Gastrocnemius medialis (tissue), 4 donors: ENCODE measurements at regions of chr4 and their contacts with region 1.

Region 1: DNA sequence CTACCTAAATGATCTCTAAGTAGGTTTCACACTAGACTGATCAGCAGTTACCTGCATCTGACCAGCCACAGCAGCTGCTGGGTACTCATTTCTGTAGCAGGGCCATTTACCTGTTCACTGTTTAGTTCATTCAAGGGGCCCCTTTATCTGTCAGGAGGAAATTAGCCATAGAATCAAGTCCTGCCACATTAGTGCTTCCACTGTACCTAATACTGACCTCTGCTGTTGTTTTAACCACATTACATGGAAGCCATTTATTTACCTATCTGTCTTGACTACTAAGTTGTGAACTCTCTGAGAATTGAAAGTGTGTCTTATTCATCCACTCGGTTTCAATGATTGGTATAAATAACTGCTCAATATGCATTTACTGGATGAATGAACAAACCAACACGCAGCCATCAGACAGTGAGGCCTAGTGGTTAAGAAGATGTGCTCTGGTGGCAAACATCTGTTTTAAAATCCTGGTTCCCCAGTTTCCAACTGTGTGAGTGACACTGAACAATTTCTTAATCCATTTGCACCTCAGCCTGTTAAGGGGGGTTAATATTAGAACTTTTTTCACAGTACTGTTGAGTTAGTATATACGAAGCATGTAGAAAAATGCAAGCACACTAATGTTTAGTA is 30.0 kb upstream of the ANXA5 start:
- DNase-seq: no peak
- ATAC-seq: peak in 1 of 2 donors; percentile 36
- H3K4me3 ChIP-seq: no peak overlapping the region
- H3K27ac ChIP-seq: no peak overlapping the region
- H3K4me1 ChIP-seq: no peaks in the 10 kb centered on the region
- H3K27me3 ChIP-seq: no peaks in the 10 kb centered on the region
- CTCF ChIP-seq: peak; percentile 24 to 63 (median 57)
- POLR2A ChIP-seq: no peak

Region 2: GRCh38 chr4:121192480-121192879 is 534.3 kb before region 1 on chr4:
- in situ Hi-C with region 1: loop called in 1 of 4 experiments (anchors 25 kb)
- intact Hi-C with region 1: loop called (anchors 5 kb)
- DNase-seq: no peak
- ATAC-seq: no peak
- H3K4me3 ChIP-seq: peak overlapping the region in 1 of 4 donors; percentile 28
- H3K27ac ChIP-seq: no peak overlapping the region
- H3K4me1 ChIP-seq: no peaks in the 10 kb centered on the region
- H3K27me3 ChIP-seq: no peaks in the 10 kb centered on the region
- CTCF ChIP-seq: peak in 4 of 5 experiments; percentile 30 to 61 (median 44)
- POLR2A ChIP-seq: no peak

Region 3: DNA sequence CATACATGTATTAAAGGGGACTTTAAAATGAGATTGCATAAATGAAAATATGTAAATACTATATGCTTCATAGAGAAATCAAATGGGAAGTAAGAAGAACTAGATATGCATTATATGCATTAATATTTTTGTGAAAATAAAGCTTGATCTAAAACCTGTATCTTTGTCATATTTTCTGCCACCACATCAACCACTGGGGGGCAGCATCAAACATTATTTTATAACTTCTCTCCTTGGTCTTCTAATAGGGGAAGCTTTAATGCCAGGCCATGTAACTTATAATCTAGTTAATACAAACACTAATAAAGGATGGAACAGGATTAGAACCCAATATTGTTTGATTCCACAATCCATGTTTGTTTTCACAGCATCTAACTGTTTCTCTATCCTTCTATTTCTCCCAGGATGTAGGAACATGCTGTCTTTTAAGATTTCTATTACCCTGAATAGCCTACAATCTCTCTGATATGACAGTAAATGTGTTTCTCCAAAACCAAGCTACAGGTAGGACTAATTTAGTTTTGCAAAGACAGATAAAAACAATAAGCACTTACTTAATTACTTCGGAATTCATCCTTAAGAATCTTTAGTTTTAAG is 355.9 kb before region 1 on chr4:
- in situ Hi-C with region 1: loop called in 3 of 4 experiments (anchors 25 kb)
- intact Hi-C with region 1: loop called (anchors 10 kb)
- DNase-seq: no peak
- ATAC-seq: no peak
- H3K4me3 ChIP-seq: no peak overlapping the region
- H3K27ac ChIP-seq: no peak overlapping the region
- H3K4me1 ChIP-seq: no peaks in the 10 kb centered on the region
- H3K27me3 ChIP-seq: no peaks in the 10 kb centered on the region
- CTCF ChIP-seq: peak in 3 of 5 experiments; percentile 15 to 56 (median 40)
- POLR2A ChIP-seq: no peak

Region 4: GRCh38 chr4:121484633-121485032 is 242.1 kb before region 1 on chr4:
- in situ Hi-C with region 1: loop called in 2 of 4 experiments (anchors 10 to 25 kb)
- intact Hi-C with region 1: loop called (anchors 10 kb)
- DNase-seq: no peak
- ATAC-seq: peak in 1 of 2 donors; percentile 36
- H3K4me3 ChIP-seq: no peak overlapping the region
- H3K27ac ChIP-seq: no peak overlapping the region
- H3K4me1 ChIP-seq: no peaks in the 10 kb centered on the region
- H3K27me3 ChIP-seq: no peaks in the 10 kb centered on the region
- CTCF ChIP-seq: peak in 3 of 5 experiments; percentile 34 to 47 (median 36)
- POLR2A ChIP-seq: no peak

Region 5: GRCh38 chr4:121696581-121697461 is 29.9 kb before region 1 on chr4 and contains the start of gene ANXA5:
- in situ Hi-C with region 1: no loop called
- intact Hi-C with region 1: loop called (anchors 1 kb)
- DNase-seq: peak; percentile 70 to 84
- ATAC-seq: peak; percentile 88 to 90
- H3K4me3 ChIP-seq: peak within 1 kb of the TSS; percentile 85 to 98 (median 94)
- H3K27ac ChIP-seq: peak within 1 kb of the TSS; percentile 89 to 97 (median 94)
- H3K4me1 ChIP-seq: peaks cover 27 to 40% of the 10 kb centered on the region in 2 donors
- H3K27me3 ChIP-seq: no peaks in the 10 kb centered on the region
- CTCF ChIP-seq: peak in 4 of 5 experiments; percentile 31 to 54 (median 38)
- POLR2A ChIP-seq: peak; percentile 76 to 77
- total RNA-seq, gene ANXA5: 59.2 to 181 (median 88.0) TPM

Region 6: DNA sequence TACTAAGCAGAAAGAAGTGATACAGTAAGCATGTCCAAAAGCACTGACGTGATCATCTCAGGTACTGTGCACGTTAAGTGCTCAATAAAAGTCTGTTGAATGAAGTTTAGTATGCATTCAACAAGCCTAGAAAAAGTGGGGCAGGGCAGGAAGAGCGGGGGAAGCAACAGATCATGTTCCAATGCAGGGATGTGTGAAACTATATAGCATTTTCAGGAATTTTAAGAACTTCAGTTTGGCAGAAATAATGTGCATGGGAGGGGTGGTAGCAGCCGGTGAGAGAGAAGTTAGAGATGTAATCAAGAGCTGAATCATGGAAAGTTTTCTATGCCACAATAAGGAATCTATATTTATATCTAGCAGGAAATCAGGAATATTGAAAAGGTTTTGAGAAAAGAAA is 116.1 kb after region 1 on chr4:
- in situ Hi-C with region 1: no loop called
- intact Hi-C with region 1: no loop called
- DNase-seq: no peak
- ATAC-seq: no peak
- H3K4me3 ChIP-seq: no peak overlapping the region
- H3K27ac ChIP-seq: no peak overlapping the region
- H3K4me1 ChIP-seq: no peaks in the 10 kb centered on the region
- H3K27me3 ChIP-seq: no peaks in the 10 kb centered on the region
- CTCF ChIP-seq: no peak
- POLR2A ChIP-seq: no peak

Region 7: DNA sequence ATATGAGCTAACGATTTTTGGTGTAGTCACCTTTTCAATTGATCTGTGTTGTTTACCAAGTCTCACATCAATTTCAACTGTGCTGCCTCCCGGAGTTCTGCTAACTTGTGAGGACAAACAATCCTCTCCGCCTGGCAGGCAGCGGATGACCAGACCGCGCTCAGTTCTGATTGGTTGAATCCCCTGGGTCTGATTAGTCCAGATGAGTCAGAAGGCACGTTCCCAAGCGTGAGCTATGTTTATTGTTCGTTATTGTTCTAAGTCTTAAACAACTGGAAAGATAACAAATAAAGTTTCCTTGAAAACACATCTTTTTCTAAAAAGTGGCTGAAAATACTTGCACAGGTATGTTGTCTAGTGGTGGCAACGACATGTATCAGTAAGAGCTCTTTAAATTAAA is 263.0 kb after region 1 on chr4:
- in situ Hi-C with region 1: no loop called
- intact Hi-C with region 1: no loop called
- DNase-seq: no peak
- ATAC-seq: no peak
- H3K4me3 ChIP-seq: no peak overlapping the region
- H3K27ac ChIP-seq: no peak overlapping the region
- H3K4me1 ChIP-seq: no peaks in the 10 kb centered on the region
- H3K27me3 ChIP-seq: no peaks in the 10 kb centered on the region
- CTCF ChIP-seq: no peak
- POLR2A ChIP-seq: no peak